ENCODE measurements at regions of chr11 and their contacts with region 1.

Region 1: DNA sequence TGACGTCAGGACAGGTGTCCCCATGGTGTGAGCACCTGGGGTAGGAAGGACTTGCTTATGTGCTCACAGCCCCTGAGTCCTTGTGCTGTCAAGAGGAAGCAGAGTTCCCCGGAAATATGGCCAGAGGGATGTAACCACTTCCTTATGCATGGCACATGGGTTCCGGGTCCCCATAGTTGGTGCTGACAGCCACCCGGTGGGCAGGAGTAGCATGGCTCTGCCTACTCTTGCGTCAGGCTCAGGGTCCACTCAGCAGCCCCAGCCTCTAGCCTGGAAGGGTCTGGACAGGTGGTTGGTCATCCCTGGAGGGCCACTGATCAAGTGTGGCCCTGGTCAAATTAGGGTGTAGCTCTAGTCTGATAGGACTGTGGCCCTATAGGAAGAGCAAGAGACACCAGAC is 42.8 kb upstream of the CCND1 start:
- DNase-seq: no peak
- H3K4me3 ChIP-seq: no peak overlapping the region
- H3K27ac ChIP-seq: no peak overlapping the region
- H3K4me1 ChIP-seq: no peaks in the 10 kb centered on the region
- H3K27me3 ChIP-seq: no peaks in the 10 kb centered on the region
- CTCF ChIP-seq: no peak
- EP300 ChIP-seq: no peak
- POLR2A ChIP-seq: no peak

Region 2: GRCh38 chr11:70082829-70083228 is 484.7 kb after region 1 on chr11:
- in situ Hi-C with region 1: no loop called
- intact Hi-C with region 1: no loop called
- DNase-seq: no peak
- H3K4me3 ChIP-seq: no peak overlapping the region
- H3K27ac ChIP-seq: no peak overlapping the region
- H3K4me1 ChIP-seq: peaks cover 0 to 3% (median 1%) of the 10 kb centered on the region in 4 donors
- H3K27me3 ChIP-seq: peaks cover 34% of the 10 kb centered on the region
- CTCF ChIP-seq: no peak
- EP300 ChIP-seq: no peak
- POLR2A ChIP-seq: no peak

Region 3: GRCh38 chr11:70536051-70536877 is 938.1 kb after region 1 on chr11:
- in situ Hi-C with region 1: no loop called
- intact Hi-C with region 1: loop called (anchors 5 kb)
- DNase-seq: peak; percentile 73
- H3K4me3 ChIP-seq: no peak overlapping the region
- H3K27ac ChIP-seq: peak overlapping the region in 1 of 4 donors; percentile 9
- H3K4me1 ChIP-seq: peaks cover 0 to 10% (median 4%) of the 10 kb centered on the region in 4 donors
- H3K27me3 ChIP-seq: no peaks in the 10 kb centered on the region
- CTCF ChIP-seq: no peak
- EP300 ChIP-seq: no peak
- POLR2A ChIP-seq: no peak

Measured in transverse colon (tissue), 4 donors.